ENCODE measurements at regions of chr1 and their contacts with region 1.

Region 1: GRCh38 chr1:200558866-200559459 is 61.6 kb downstream of the KIF14 start:
- DNase-seq: peak; percentile 84
- H3K4me3 ChIP-seq: no peak overlapping the region
- H3K27ac ChIP-seq: no peak overlapping the region
- H3K4me1 ChIP-seq: no peaks in the 10 kb centered on the region
- H3K27me3 ChIP-seq: no peaks in the 10 kb centered on the region
- CTCF ChIP-seq: peak; percentile 40 to 54
- POLR2A ChIP-seq: no peak

Region 2: GRCh38 chr1:200802865-200803512 is 244.0 kb after region 1 on chr1:
- CTCF ChIA-PET with region 1: interaction called, 39 read pairs
- POLR2A ChIA-PET with region 1: no interaction called
- dilution Hi-C with region 1: no loop called
- intact Hi-C with region 1: loop called (anchors 1 kb)
- DNase-seq: peak; percentile 84
- H3K4me3 ChIP-seq: no peak overlapping the region
- H3K27ac ChIP-seq: no peak overlapping the region
- H3K4me1 ChIP-seq: no peaks in the 10 kb centered on the region
- H3K27me3 ChIP-seq: no peaks in the 10 kb centered on the region
- CTCF ChIP-seq: peak; percentile 85 to 87
- POLR2A ChIP-seq: no peak

Region 3: GRCh38 chr1:200866521-200866920 is 307.6 kb after region 1 on chr1:
- CTCF ChIA-PET with region 1: interaction called, 10 read pairs
- POLR2A ChIA-PET with region 1: no interaction called
- dilution Hi-C with region 1: no loop called
- intact Hi-C with region 1: no loop called
- DNase-seq: no peak
- H3K4me3 ChIP-seq: no peak overlapping the region
- H3K27ac ChIP-seq: no peak overlapping the region
- H3K4me1 ChIP-seq: no peaks in the 10 kb centered on the region
- H3K27me3 ChIP-seq: peaks cover 8 to 10% of the 10 kb centered on the region in 2 experiments
- CTCF ChIP-seq: no peak
- POLR2A ChIP-seq: no peak

Region 4: GRCh38 chr1:201114236-201115131 is 555.5 kb after region 1 on chr1:
- CTCF ChIA-PET with region 1: interaction called, 18 read pairs
- POLR2A ChIA-PET with region 1: no interaction called
- dilution Hi-C with region 1: no loop called
- intact Hi-C with region 1: loop called (anchors 10 kb)
- DNase-seq: peak; percentile 93
- H3K4me3 ChIP-seq: peak overlapping the region in 2 of 3 experiments; percentile 9 to 35
- H3K27ac ChIP-seq: no peak overlapping the region
- H3K4me1 ChIP-seq: no peaks in the 10 kb centered on the region
- H3K27me3 ChIP-seq: peaks cover 26 to 45% of the 10 kb centered on the region in 2 experiments
- CTCF ChIP-seq: peak; percentile 73 to 89
- POLR2A ChIP-seq: no peak

Measured in endothelial cell of umbilical vein (primary cell).